HAP-1 (cell line): ENCODE measurements at regions of chr1 and their contacts with region 1.

Region 1: GRCh38 chr1:224329842-224330753 is at the start of gene NVL:
- DNase-seq: peak; percentile 92 to 94
- H3K4me3 ChIP-seq: peak within 1 kb of the TSS; percentile 91
- H3K4me1 ChIP-seq: peaks cover 12% of the 10 kb centered on the region
- H3K27me3 ChIP-seq: no peaks in the 10 kb centered on the region

Region 2: GRCh38 chr1:223444437-223444836 is 885.7 kb before region 1 on chr1:
- in situ Hi-C with region 1: no loop called
- DNase-seq: no peak
- H3K4me3 ChIP-seq: no peak overlapping the region
- H3K4me1 ChIP-seq: no peaks in the 10 kb centered on the region
- H3K27me3 ChIP-seq: no peaks in the 10 kb centered on the region

Region 3: DNA sequence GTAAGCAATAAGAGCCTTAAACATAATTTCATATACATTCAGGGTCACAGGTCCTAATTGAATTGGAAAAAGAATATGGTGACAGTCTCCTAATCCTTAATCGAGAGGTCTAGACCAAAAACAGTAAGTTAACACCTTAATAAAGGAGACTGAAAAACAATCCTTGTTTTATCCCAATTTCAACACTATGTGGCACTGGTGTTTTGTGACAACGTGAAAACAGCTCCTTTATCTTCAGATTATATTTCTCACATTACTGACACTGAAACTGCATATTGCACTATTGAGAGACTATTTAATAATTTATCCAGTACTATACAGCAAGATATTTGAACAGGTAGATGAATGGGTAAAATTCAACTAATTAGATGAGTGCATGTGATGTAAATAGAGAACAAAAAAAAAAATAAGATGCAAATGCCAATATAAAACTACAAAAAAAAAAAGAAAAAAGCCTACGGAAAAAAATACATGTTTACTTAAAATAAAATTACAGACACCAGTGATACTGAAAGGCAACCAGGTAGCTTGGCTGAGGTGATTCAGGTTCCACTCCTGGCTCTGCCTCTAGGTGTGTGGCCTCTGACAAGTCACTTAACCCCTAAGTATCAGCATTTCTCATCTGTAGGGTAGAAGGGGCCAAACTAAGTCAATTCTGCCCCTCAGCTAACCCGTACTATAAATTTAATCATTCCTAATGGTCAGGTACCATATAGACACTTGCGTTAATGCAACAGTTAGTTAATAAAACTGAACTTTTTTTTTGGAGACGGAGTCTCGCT is 518.3 kb before region 1 on chr1:
- in situ Hi-C with region 1: loop called (anchors 25 kb)
- DNase-seq: peak in 1 of 2 experiments; percentile 52
- H3K4me3 ChIP-seq: no peak overlapping the region
- H3K4me1 ChIP-seq: no peaks in the 10 kb centered on the region
- H3K27me3 ChIP-seq: no peaks in the 10 kb centered on the region

Region 4: DNA sequence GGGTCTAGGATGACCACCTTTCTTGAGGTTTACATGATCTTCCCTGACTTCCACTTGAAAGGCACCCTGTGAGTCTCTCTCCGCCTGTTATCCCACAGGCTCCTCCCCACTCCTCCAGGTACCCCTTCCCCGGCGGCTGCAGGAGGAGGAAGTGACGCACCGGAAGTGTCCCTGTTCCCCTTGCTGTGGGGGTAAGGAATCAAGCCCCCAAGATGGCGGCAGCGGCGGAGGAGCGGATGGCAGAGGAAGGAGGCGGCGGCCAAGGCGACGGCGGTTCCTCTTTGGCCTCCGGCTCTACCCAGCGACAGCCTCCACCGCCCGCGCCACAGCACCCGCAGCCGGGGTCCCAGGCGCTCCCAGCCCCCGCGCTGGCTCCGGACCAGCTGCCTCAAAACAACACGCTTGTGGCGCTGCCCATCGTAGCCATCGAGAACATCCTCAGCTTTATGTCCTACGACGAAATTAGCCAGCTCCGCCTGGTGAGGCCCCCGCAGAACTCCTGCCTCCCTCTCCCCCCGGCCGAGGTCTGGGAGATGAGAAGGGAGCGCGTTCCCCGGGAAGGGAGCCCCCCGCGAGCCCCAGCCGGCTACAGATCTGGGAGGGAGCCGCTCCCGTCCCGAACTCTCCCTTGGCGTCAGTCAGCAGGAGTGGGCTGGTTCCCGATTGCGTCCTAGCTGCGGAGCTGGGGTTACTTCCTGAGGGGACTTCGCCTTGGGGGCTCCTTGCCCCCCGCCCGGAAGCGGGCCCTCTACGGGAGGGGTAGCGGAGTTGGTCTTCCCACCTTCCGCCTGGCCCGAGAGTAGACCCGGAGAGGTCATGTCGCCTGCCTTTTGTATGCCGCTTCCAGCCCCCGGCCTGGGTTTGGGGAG is 215.9 kb before region 1 on chr1 and contains the start of gene FBXO28:
- in situ Hi-C with region 1: loop called (anchors 10 kb)
- DNase-seq: peak; percentile 92 to 98
- H3K4me3 ChIP-seq: peak within 1 kb of the TSS; percentile 96
- H3K4me1 ChIP-seq: peaks cover 15% of the 10 kb centered on the region
- H3K27me3 ChIP-seq: no peaks in the 10 kb centered on the region

Region 5: GRCh38 chr1:224160171-224160682 is 169.9 kb before region 1 on chr1:
- in situ Hi-C with region 1: no loop called
- DNase-seq: no peak
- H3K4me3 ChIP-seq: no peak overlapping the region
- H3K4me1 ChIP-seq: peaks cover 22% of the 10 kb centered on the region
- H3K27me3 ChIP-seq: no peaks in the 10 kb centered on the region